Left cardiac atrium (tissue), 4 donors: ENCODE measurements at regions of chr7 and their contacts with region 1.

Region 1: GRCh38 chr7:101465576-101466196 is 103.0 kb downstream of the COL26A1 start:
- DNase-seq: no peak
- ATAC-seq: no peak

Region 2: DNA sequence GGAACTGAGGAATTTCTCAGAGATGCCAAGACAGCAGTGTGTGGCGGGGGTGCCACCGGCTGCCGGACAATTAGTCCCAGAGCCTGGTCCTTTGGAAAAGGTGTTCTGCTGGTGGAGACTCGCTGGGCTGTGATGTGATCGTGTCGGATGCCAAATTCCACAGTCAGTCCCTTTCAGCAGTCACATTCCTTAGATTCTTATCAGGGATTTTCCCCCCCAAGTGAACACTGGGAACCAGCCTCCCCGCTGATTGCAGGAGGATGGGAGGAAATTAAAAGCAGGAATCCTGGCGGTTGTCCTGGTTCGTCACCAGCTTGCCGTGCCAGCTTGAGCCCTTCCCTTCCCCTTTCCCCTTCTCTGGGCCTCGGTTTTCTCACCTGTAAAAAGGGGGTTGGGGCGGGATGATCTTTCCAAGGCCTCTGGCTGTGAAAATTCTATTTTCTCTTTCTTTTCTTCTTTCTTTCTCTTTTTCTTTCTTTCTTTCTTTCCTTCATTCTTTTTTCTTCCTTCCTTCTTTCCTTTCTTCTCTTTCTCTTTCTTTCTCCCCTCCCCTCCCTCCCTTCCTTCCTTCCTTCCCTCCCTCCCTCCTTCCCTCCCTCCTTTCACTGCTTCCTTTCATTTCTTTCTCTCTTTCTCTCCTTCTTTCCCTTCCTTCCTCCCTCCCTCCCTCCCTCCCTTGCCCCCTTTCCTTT is 63.5 kb before region 1 on chr7:
- intact Hi-C with region 1: loop called in 1 of 2 experiments (anchors 10 kb)
- DNase-seq: no peak
- ATAC-seq: no peak